Activated CD4-positive, alpha-beta memory T cell treated with anti-CD3 and anti-CD28 coated beads for 36 hours (primary cell): ENCODE measurements at regions of chr5 and their contacts with region 1.

Region 1: GRCh38 chr5:138575194-138576015 is at the start of gene HSPA9:
- DNase-seq: peak; percentile 98
- H3K4me3 Mint-ChIP-seq: peak within 1 kb of the TSS; percentile 99
- H3K27ac Mint-ChIP-seq: peak within 1 kb of the TSS; percentile 98
- H3K4me1 Mint-ChIP-seq: peaks cover 35% of the 10 kb centered on the region
- H3K27me3 Mint-ChIP-seq: no peaks in the 10 kb centered on the region
- total RNA-seq, gene HSPA9: 358 to 368 TPM

Region 2: DNA sequence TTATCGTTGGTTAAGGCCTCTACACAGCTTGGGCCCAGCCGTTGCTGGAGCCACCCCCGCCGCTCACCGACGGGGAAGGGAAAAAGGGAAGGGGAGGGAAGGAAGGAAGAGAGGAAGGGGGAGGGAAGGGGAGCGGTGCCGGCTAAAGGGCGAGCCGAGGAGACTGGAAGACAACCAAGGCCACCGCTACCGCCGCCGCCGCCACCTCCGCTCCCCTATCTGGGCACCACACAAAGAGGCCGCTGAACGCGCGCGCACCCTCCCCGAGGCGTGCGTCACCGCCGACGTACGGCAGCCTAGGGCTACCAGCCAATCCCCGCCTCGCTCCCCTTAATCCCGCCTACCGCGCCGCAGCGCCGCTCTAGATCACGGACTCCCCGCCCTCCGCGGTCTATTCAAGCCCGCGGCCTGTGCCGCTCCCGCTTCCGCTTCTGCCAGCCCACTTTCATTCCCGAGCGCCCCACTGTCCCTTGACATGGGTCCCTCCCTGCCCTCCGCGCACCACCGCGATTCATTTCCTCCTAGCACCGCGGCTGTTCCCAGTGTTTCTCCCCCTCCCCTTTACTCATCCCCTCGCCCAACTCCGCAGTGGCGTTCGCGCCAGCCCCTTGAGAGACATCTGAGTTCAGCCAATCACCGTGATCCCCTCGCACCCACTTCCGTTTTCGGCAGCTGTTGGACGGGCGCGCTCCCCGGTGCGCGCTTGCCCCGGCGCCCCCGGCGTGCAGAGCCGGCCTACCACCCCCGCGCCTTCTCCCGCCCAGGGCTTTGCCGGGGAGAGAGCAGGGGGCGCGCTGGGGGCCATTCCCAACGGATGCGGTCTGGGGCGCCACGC is 821.1 kb before region 1 on chr5 and contains the start of gene HNRNPA0:
- CTCF ChIA-PET with region 1: no interaction called
- POLR2A ChIA-PET with region 1: no interaction called
- intact Hi-C with region 1: loop called (anchors 5 kb)
- DNase-seq: peak; percentile 97
- H3K4me3 Mint-ChIP-seq: peak within 1 kb of the TSS; percentile 93
- H3K27ac Mint-ChIP-seq: peak within 1 kb of the TSS; percentile 100
- H3K4me1 Mint-ChIP-seq: peaks cover 32% of the 10 kb centered on the region
- H3K27me3 Mint-ChIP-seq: peaks cover 3% of the 10 kb centered on the region
- total RNA-seq, gene HNRNPA0: 29.2 to 29.6 TPM

Region 3: GRCh38 chr5:138542956-138543729 is 32.3 kb before region 1 on chr5 and contains the start of gene ETF1:
- CTCF ChIA-PET with region 1: interaction called, 13 read pairs
- POLR2A ChIA-PET with region 1: interaction called, 41 read pairs
- intact Hi-C with region 1: loop called (anchors 1 kb)
- DNase-seq: peak; percentile 100
- H3K4me3 Mint-ChIP-seq: peak within 1 kb of the TSS; percentile 98
- H3K27ac Mint-ChIP-seq: peak within 1 kb of the TSS; percentile 100
- H3K4me1 Mint-ChIP-seq: peaks cover 71% of the 10 kb centered on the region
- H3K27me3 Mint-ChIP-seq: no peaks in the 10 kb centered on the region
- total RNA-seq, gene ETF1: 131 to 132 TPM

Region 4: DNA sequence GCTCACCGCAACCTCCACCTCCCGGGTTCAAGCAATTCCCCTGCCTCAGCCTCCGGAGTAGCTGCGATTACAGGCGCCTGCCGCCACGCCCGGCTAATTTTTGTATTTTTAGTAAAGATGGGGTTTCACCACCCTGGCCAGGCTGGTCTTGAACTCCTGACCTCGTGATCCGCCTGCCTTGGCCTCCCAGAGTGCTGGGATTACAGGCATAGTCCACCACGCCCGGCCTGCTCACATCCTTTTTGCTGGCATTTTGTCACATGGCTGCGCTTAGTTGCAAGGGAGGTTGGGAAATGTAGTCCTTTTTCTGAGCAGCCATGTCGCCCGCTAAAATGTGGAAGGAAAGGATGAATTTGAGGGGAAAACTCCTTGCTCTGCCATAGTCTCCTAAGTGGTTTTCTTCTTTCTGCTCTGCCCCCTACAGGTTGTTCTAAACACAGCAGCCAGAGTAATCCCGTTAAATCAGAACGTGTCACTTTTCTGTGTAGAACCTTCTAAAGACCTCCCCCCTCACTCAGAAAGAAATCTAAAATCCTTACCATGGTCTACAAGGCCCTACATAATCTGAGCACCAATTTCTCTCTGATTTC is 57.6 kb after region 1 on chr5:
- CTCF ChIA-PET with region 1: interaction called, 4 read pairs
- POLR2A ChIA-PET with region 1: no interaction called
- intact Hi-C with region 1: loop called (anchors 1 kb)
- DNase-seq: peak; percentile 48
- H3K4me3 Mint-ChIP-seq: no peak overlapping the region
- H3K27ac Mint-ChIP-seq: no peak overlapping the region
- H3K4me1 Mint-ChIP-seq: no peaks in the 10 kb centered on the region
- H3K27me3 Mint-ChIP-seq: peaks cover 34% of the 10 kb centered on the region

Region 5: GRCh38 chr5:138664276-138664943 is 89.0 kb after region 1 on chr5:
- CTCF ChIA-PET with region 1: no interaction called
- POLR2A ChIA-PET with region 1: no interaction called
- intact Hi-C with region 1: no loop called
- DNase-seq: no peak
- H3K4me3 Mint-ChIP-seq: no peak overlapping the region
- H3K27ac Mint-ChIP-seq: no peak overlapping the region
- H3K4me1 Mint-ChIP-seq: peaks cover 32% of the 10 kb centered on the region
- H3K27me3 Mint-ChIP-seq: peaks cover 90% of the 10 kb centered on the region

Region 6: DNA sequence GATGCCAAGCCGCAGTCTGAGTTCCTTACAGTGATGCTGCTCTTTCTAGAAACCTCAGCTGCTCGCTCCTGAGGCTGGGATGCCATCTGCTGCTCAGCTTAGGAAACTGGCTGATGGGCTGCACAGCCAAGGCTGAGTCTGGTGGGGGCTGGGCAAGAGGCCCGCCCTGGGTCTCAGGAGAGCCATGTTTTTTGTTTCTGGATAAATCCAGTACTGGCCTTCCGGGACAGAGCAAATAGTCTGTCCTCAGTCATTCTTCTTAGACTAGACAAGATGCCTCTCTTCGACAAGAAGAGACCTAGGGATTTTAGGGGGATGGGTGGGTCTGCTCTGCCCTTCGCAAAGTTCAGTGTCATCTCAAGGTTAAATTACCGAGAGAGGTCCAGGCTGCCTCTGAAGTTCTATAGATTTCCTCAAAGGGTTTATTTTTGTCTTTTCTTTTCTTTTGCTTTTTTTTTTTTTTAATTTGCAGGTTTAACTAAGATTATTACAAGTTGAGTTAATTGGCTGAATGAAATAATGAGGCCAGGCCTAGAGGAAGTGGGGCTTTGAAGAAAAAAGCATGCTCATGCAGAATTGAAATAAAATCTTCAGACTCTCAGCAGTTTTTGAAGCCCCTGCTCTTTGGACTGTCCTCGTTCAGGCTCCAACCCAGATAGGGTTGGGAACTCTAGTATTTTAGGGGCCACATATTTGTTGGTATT is 687.5 kb after region 1 on chr5:
- CTCF ChIA-PET with region 1: interaction called, 10 read pairs
- POLR2A ChIA-PET with region 1: no interaction called
- intact Hi-C with region 1: loop called (anchors 2 kb)
- DNase-seq: peak; percentile 82
- H3K4me3 Mint-ChIP-seq: no peak overlapping the region
- H3K27ac Mint-ChIP-seq: no peak overlapping the region
- H3K4me1 Mint-ChIP-seq: no peaks in the 10 kb centered on the region
- H3K27me3 Mint-ChIP-seq: peaks cover 1% of the 10 kb centered on the region

Region 7: DNA sequence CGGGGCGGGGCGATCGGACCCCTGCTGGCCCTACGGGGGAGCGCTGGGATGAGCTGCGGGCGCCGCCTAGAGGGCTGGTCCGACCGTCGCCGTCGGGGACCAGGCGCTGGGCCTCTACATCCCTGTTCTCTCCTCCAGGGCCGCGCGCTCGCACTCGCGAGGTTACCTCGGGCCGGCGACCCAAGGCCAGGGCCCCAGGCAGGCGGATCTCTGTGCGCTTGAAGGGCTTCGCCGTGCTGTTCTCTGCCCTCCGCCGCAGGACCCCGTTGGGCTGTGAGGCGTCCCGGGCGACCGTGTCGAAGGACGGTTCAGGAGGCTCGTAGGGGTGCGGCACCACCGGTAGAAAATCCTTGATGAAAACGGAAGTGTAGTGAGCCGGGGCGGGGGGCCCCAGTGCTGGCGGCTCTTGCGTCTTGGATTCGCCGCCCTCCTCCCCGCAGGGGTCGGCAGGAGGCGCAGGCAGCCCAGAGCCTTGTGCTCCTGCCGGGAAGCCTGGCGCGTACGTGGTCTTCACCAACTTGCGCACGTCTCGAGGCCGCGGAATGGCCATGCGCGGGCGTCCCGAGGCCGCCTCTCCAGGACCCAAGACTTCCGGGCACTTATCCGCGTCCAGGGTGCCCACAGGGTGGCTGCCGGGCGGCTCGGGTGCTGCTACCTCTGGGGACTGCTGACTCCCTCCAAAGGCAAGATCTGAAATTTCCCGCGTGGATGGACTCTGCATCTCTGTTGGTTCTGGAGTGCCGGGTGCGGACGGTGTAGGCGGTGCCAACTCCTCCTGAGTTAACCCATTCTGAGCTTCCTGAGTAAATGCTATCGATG is 817.5 kb after region 1 on chr5:
- CTCF ChIA-PET with region 1: no interaction called
- POLR2A ChIA-PET with region 1: no interaction called
- intact Hi-C with region 1: loop called (anchors 1 kb)
- DNase-seq: peak; percentile 93
- H3K4me3 Mint-ChIP-seq: peak overlapping the region; percentile 93
- H3K27ac Mint-ChIP-seq: peak overlapping the region; percentile 87
- H3K4me1 Mint-ChIP-seq: peaks cover 34% of the 10 kb centered on the region
- H3K27me3 Mint-ChIP-seq: no peaks in the 10 kb centered on the region